ENCODE measurements at regions of chr11 and their contacts with region 1.

Region 1: GRCh38 chr11:65471410-65471762 is 27.5 kb upstream of the MALAT1 start:
- DNase-seq: peak; percentile 73
- H3K4me3 ChIP-seq: peak overlapping the region in 1 of 2 donors; percentile 23
- H3K27ac ChIP-seq: peak overlapping the region; percentile 98 to 100
- H3K4me1 ChIP-seq: peaks cover 9% of the 10 kb centered on the region
- H3K27me3 ChIP-seq: no peaks in the 10 kb centered on the region
- CTCF ChIP-seq: peak; percentile 40 to 84 (median 56)
- POLR2A ChIP-seq: no peak

Region 2: GRCh38 chr11:65429724-65430405 is 41.5 kb before region 1 on chr11:
- intact Hi-C with region 1: loop called (anchors 5 kb)
- DNase-seq: peak; percentile 76
- H3K4me3 ChIP-seq: peak overlapping the region in 1 of 2 donors; percentile 97
- H3K27ac ChIP-seq: peak overlapping the region; percentile 100
- H3K4me1 ChIP-seq: no peaks in the 10 kb centered on the region
- H3K27me3 ChIP-seq: no peaks in the 10 kb centered on the region
- CTCF ChIP-seq: peak in 1 of 4 experiments; percentile 5
- POLR2A ChIP-seq: peak; percentile 27

Region 3: GRCh38 chr11:65497141-65498041 is 26.0 kb after region 1 on chr11:
- intact Hi-C with region 1: loop called (anchors 2 kb)
- DNase-seq: peak; percentile 97
- H3K4me3 ChIP-seq: peak overlapping the region; percentile 80 to 88
- H3K27ac ChIP-seq: peak overlapping the region; percentile 98 to 100
- H3K4me1 ChIP-seq: peaks cover 29% of the 10 kb centered on the region
- H3K27me3 ChIP-seq: no peaks in the 10 kb centered on the region
- CTCF ChIP-seq: peak in 1 of 4 experiments; percentile 29
- POLR2A ChIP-seq: peak; percentile 72